GM10248 (cell line): ENCODE measurements at regions of chr5 and their contacts with region 1.

Region 1: DNA sequence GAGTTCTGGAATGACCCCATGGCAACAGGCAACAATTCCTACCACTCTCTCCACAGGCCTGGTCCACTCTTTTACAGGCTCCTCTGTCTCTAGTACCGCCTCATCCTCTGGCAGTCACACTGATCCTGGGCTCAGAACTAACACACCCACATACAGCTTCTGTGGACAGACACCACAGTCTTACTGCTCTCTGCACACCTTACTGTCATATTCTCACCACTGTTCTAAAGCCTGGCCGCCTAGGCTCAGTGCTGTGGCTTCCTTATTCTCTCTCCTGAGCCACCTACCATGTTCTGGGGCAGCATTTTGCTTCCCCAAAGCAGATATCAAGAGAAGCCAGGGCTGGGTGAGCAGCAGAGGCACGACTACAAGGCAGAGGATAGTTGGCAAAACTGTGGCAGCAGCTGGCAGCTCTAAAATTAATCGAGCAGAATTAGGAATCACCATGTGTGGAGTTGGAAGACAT is 14.8 kb downstream of the REEP5 start:
- DNase-seq: no peak
- CTCF ChIP-seq: no peak

Region 2: GRCh38 chr5:112880219-112880964 is 26.8 kb before region 1 on chr5:
- CTCF ChIA-PET with region 1: interaction called, 12 read pairs
- POLR2A ChIA-PET with region 1: no interaction called
- DNase-seq: no peak
- CTCF ChIP-seq: no peak

Region 3: DNA sequence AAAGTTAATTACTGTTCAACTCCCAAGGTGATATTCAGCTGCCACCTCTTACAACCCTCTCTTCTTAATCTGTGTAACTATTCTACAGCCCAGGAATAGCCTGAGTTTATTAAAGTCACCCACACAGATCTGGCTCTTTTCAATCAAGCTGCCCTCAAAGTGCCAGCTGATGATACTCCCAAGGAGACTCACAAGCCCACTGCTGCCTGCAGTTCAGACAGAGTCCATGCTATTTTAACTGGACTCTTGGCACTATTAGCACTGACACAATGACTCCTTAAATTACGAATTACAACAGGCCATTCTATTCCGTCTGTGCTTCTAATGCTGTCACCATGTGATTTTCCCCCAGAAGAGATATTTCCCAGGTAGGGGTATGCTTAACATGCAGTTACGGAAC is 11.5 kb before region 1 on chr5:
- CTCF ChIA-PET with region 1: interaction called, 12 read pairs
- POLR2A ChIA-PET with region 1: no interaction called
- DNase-seq: no peak
- CTCF ChIP-seq: no peak